CD8-positive, alpha-beta T cell (primary cell): ENCODE measurements at regions of chr9 and their contacts with region 1.

Region 1: DNA sequence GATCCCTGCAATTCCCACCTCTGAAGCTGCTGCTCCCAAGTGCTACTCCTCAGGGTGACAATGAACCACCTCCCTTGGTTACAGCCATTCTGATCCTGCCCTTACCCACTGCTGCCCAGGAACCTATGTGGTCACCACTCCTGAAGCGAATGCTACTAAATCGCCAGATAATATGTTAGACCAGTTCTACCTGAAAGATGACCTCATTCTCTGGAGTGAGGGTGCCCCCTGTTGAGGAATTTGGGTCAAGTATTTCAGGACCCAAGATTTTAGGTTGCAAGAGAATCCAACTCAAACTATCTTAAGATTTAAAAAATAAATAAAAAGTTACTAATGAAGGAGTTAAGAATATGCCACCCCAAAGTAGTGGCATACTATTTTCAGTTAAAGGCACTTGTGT is 5.8 kb upstream of the SNAPC3 start:
- DNase-seq: peak in 7 of 9 experiments; percentile 26 to 64 (median 47)
- ATAC-seq: no peak
- H3K4me3 ChIP-seq: no peak overlapping the region
- H3K4me3 Mint-ChIP-seq: no peak overlapping the region
- H3K27ac ChIP-seq: no peak overlapping the region
- H3K27ac Mint-ChIP-seq: no peak overlapping the region
- H3K4me1 ChIP-seq: peaks cover 1% of the 10 kb centered on the region
- H3K4me1 Mint-ChIP-seq: peaks cover 4% of the 10 kb centered on the region
- H3K27me3 ChIP-seq: no peaks in the 10 kb centered on the region
- H3K27me3 Mint-ChIP-seq: no peaks in the 10 kb centered on the region
- CTCF ChIP-seq: peak; percentile 38

Region 2: GRCh38 chr9:14838701-14839100 is 578.2 kb before region 1 on chr9:
- CTCF ChIA-PET with region 1: no interaction called
- POLR2A ChIA-PET with region 1: no interaction called
- intact Hi-C with region 1: no loop called
- DNase-seq: no peak
- ATAC-seq: no peak
- H3K4me3 ChIP-seq: no peak overlapping the region
- H3K4me3 Mint-ChIP-seq: no peak overlapping the region
- H3K27ac ChIP-seq: no peak overlapping the region
- H3K27ac Mint-ChIP-seq: no peak overlapping the region
- H3K4me1 ChIP-seq: no peaks in the 10 kb centered on the region
- H3K4me1 Mint-ChIP-seq: no peaks in the 10 kb centered on the region
- H3K27me3 ChIP-seq: no peaks in the 10 kb centered on the region
- H3K27me3 Mint-ChIP-seq: peaks cover 17% of the 10 kb centered on the region
- CTCF ChIP-seq: no peak

Region 3: DNA sequence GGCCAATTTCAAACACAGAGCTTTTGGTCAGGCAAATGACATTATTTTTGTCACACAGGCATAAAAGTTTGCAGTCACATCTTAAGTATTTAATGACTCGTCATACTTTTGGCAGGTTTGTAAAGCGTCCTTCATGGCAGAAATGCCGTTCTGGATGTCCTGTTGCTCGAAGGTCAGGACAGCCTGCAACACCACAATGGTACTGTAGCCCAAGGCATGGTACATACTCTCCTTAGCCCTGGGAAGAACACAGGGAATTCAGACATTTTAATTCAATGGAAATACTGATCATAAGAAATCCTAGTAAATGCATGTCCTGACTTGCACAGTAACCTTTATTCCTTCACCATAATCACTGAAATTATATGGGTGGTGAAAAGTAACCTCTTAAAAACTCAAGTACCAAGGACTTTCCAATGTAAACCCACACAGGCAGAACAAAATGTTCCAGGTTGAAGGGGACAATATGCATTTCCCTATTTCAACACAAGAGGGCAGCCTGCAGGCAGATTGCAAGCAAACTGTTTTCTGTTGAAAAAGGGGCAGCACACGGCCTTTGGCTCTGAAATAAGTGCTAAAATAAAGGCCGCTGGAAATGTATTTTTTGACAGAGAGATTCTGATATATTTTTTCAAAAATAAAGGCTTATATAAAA is 205.6 kb before region 1 on chr9:
- CTCF ChIA-PET with region 1: interaction called, 11 read pairs
- POLR2A ChIA-PET with region 1: no interaction called
- intact Hi-C with region 1: loop called (anchors 1 kb)
- DNase-seq: peak; percentile 21 to 75 (median 56)
- ATAC-seq: peak; percentile 56
- H3K4me3 ChIP-seq: no peak overlapping the region
- H3K4me3 Mint-ChIP-seq: no peak overlapping the region
- H3K27ac ChIP-seq: no peak overlapping the region
- H3K27ac Mint-ChIP-seq: no peak overlapping the region
- H3K4me1 ChIP-seq: no peaks in the 10 kb centered on the region
- H3K4me1 Mint-ChIP-seq: peaks cover 4% of the 10 kb centered on the region
- H3K27me3 ChIP-seq: no peaks in the 10 kb centered on the region
- H3K27me3 Mint-ChIP-seq: no peaks in the 10 kb centered on the region
- CTCF ChIP-seq: peak; percentile 90

Region 4: GRCh38 chr9:15711931-15712330 is 295.1 kb after region 1 on chr9:
- CTCF ChIA-PET with region 1: no interaction called
- POLR2A ChIA-PET with region 1: no interaction called
- intact Hi-C with region 1: no loop called
- DNase-seq: no peak
- ATAC-seq: no peak
- H3K4me3 ChIP-seq: no peak overlapping the region
- H3K4me3 Mint-ChIP-seq: no peak overlapping the region
- H3K27ac ChIP-seq: no peak overlapping the region
- H3K27ac Mint-ChIP-seq: no peak overlapping the region
- H3K4me1 ChIP-seq: no peaks in the 10 kb centered on the region
- H3K4me1 Mint-ChIP-seq: no peaks in the 10 kb centered on the region
- H3K27me3 ChIP-seq: no peaks in the 10 kb centered on the region
- H3K27me3 Mint-ChIP-seq: no peaks in the 10 kb centered on the region
- CTCF ChIP-seq: no peak